Aorta (tissue), 5 donors: ENCODE measurements at regions of chr11 and their contacts with region 1.

Region 1: DNA sequence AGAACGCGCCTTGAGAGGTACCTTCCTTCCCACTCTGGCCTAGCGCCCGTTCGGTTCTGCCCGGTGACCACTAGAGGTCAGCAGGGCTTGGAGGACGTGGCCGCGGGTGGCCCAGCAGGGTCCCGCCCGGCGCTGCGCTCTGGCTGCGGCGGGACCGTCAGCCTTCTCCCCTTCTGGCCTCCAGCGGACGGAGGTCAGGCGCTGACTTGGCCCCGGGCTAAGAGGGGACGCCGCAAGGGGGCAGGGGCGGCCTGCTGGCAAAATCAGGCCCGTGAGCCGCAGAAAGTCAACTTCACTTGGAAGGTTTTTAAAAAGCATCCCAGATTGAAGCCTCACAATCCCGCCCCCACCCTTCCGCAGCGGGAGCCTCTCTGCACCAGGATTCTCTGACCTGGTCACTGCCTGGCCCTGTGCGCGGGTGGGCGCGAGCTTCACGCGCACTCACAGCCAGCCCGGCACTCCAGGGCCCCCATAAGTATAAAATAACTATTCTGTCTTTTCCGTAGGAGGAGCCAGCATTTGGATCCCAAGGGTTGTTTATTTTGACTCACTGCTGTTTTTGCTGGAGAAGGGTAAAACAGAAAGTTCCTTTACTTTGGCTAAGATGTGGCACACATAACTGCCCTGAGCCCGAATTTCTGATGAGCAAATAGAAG is 23.2 kb upstream of the ZBTB16 start:
- DNase-seq: peak; percentile 87 to 93
- ATAC-seq: peak; percentile 92
- H3K4me3 ChIP-seq: no peak overlapping the region
- H3K27ac ChIP-seq: peak overlapping the region; percentile 62 to 70
- H3K4me1 ChIP-seq: no peaks in the 10 kb centered on the region
- H3K27me3 ChIP-seq: no peaks in the 10 kb centered on the region

Region 2: DNA sequence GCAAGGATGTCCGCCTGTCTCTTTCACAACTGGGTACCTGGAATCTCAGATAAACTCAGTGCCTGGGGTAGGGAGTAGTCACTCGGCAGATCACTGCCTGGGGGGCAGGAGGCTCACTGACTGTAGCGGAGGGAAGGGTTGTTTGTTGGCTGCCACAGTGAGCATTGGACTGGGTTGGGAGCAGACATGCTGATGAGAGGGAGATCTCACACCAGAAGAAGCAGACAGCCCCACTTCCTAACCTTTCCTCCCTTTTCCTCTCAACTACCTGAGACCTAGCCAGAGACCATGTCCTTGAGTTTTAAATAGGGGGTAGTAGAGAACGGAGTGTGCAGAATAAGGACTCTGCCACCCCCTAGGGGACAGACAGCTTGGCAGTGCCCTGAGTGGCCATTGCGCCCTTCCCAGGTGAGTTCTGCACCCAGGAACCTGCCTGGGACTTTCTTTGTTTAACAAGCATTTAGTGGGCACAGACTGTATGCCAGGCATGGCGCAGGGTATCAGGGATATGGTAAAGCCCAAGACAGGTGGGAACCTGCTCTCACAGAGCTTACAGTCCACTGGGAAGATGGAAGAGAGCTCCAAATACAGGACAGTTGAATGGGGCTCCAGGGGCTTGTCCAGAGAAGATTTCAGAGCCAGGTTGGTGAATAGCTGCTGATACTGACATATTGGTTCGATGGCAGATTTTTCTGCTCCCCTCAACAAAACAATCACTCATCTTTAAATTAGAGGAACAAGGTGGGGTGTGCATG is 144.2 kb after region 1 on chr11:
- intact Hi-C with region 1: loop called (anchors 2 to 5 kb)
- DNase-seq: peak; percentile 69 to 79
- ATAC-seq: peak; percentile 54
- H3K4me3 ChIP-seq: peak overlapping the region in 1 of 2 donors; percentile 66
- H3K27ac ChIP-seq: peak overlapping the region; percentile 94 to 99
- H3K4me1 ChIP-seq: peaks cover 3 to 5% of the 10 kb centered on the region in 2 donors
- H3K27me3 ChIP-seq: no peaks in the 10 kb centered on the region

Region 3: DNA sequence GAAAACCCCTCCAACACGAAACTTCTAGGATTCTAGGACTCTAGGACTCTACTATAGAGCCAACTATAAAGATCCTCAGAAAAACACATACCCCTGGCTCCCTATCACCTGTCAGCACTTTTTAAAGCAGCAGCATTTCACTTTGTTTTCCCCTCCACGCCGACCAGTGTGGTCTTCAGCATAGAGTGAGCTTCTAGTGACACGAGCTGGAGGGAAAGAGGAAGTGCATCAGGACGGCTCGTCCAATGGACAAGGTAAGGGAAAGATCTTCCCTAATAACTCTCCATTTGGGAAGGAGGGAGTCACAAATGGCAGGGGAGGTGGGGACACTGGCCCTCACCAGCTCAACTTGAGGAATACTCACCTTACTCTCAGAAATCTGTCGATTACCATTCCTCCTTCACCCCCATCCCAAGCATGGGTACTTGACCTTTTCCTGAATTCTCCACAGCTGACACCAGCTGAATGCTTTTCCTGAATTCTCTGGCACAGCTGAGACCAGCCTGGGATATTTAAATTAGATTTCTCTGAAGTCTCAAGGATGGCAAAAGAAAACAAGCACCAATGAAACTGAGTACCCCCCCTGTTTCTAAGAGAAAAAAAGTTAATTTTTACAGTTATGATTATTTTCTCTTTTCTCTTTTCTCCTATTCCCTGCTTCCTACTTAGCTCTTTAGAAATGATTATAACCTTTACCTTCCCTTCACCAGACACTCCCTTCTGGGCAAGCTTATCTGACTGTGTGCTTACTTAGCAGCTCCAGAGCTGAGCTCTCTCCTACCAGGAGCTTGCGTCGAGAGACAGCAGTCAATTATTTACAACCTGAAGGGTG is 226.6 kb after region 1 on chr11:
- intact Hi-C with region 1: loop called (anchors 2 to 5 kb)
- DNase-seq: no peak
- ATAC-seq: peak; percentile 39
- H3K4me3 ChIP-seq: no peak overlapping the region
- H3K27ac ChIP-seq: no peak overlapping the region
- H3K4me1 ChIP-seq: no peaks in the 10 kb centered on the region
- H3K27me3 ChIP-seq: no peaks in the 10 kb centered on the region